Common myeloid progenitor, CD34-positive (primary cell): ENCODE measurements at regions of chr9 and their contacts with region 1.

Region 1: GRCh38 chr9:21317956-21318923 is 13.1 kb upstream of the IFNA5 start:
- DNase-seq: peak; percentile 31 to 66 (median 63)
- H3K4me3 ChIP-seq: no peak overlapping the region
- H3K27ac ChIP-seq: no peak overlapping the region
- H3K4me1 ChIP-seq: peaks cover 0 to 9% (median 3%) of the 10 kb centered on the region in 4 experiments
- H3K27me3 ChIP-seq: peaks cover 0 to 3% (median 0%) of the 10 kb centered on the region in 5 experiments

Region 2: DNA sequence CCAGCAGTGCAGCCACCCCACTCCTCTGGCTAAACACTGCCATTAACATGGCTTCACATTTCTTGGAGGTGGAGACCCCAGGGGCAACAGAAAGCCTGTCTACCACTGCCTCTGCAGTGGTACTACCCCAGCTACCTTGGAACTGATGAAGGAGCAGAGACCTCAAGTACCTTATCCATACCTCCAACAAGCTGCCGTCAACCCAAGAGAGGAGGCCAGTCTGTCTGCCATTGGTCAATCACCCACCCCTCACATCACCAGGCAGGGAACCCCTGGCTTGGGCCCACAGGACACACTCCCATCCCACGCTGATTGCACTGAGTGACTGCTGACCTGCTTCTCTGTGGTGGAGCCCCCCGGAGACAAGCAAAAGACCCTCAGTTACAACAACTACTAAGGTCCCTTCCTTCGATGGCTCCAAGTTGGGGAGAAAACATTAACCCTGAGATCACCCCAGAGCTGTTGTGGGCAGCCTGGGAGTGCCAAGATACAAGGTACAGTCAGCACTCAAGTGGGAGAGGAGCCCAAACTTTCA is 84.0 kb before region 1 on chr9:
- CTCF ChIA-PET with region 1: interaction called, 18 read pairs
- POLR2A ChIA-PET with region 1: no interaction called
- DNase-seq: no peak
- H3K4me3 ChIP-seq: no peak overlapping the region
- H3K27ac ChIP-seq: no peak overlapping the region
- H3K4me1 ChIP-seq: peaks cover 0 to 3% (median 0%) of the 10 kb centered on the region in 4 experiments
- H3K27me3 ChIP-seq: no peaks in the 10 kb centered on the region

Region 3: DNA sequence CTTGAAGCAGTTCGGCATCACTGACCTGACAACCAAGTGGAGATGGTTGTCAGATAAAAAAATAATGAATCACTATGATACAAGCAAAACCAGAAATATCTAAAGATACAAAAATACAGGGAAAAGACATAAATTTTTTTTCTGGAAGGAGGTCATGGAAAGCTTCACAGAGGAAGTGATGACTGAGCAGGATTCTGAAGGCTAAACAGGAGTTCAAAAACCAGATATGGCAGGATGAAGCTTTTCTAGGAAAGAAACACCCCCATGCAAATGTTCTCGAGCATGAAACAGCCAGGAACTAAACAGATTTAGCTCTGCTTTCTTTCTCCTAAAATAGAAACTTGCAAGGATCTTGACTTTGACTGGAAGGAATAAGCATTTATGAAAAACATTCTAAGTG is 224.5 kb after region 1 on chr9:
- CTCF ChIA-PET with region 1: no interaction called
- POLR2A ChIA-PET with region 1: no interaction called
- DNase-seq: no peak
- H3K4me3 ChIP-seq: no peak overlapping the region
- H3K27ac ChIP-seq: no peak overlapping the region
- H3K4me1 ChIP-seq: no peaks in the 10 kb centered on the region
- H3K27me3 ChIP-seq: peaks cover 0 to 7% (median 0%) of the 10 kb centered on the region in 5 experiments

Region 4: GRCh38 chr9:21626493-21626892 is 308.3 kb after region 1 on chr9:
- CTCF ChIA-PET with region 1: no interaction called
- POLR2A ChIA-PET with region 1: no interaction called
- DNase-seq: no peak
- H3K4me3 ChIP-seq: no peak overlapping the region
- H3K27ac ChIP-seq: no peak overlapping the region
- H3K4me1 ChIP-seq: no peaks in the 10 kb centered on the region
- H3K27me3 ChIP-seq: no peaks in the 10 kb centered on the region